Activated CD4-positive, alpha-beta T cell treated with anti-CD3 and anti-CD28 coated beads, Interleukin-2, amount 10 ng/mL, durations not matched to agents 24 days and 14 days (primary cell): ENCODE measurements at regions of chr10 and their contacts with region 1.

Region 1: DNA sequence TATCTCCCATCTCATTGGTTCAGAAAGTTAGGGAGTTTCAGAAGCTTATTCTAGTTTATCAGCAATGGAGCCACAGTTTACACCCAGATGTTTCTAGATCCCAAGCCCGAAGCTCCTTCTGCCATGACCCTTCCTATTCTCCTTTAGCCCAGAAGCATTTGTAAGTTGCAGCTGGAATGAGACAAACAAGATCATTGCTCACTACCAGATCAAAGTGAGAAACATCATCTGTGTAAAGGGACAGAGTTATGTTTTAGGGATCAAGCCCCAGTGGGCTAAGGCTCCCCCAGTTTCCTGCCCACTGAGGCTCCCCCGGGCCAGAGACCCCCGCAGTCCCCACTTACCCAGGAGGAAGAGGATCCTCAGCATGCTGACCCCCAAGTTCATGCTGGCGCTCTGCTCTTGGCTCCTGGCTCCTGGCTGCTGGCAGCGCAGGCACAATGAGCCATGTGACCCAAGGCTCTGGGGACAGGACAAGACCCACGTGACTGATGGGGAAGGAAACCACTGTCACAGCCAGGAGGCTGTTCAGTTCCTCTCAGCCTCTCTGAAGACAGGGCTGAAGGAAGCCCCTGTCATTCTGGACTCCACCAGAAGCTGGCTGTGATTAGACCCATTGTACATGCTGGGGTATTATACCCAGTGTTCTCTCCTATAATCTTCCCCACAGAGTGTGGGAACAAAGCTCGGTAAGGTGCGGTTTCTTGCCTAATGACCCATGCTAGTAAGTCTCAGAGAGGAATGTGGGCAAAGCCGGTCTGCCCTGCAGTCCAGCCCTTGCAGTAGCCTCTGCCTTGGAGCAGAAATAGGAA is at the start of gene TMEM273:
- DNase-seq: peak; percentile 77
- H3K4me3 Mint-ChIP-seq: peak within 1 kb of the TSS; percentile 83
- H3K27ac Mint-ChIP-seq: peak within 1 kb of the TSS; percentile 77
- H3K4me1 Mint-ChIP-seq: peaks cover 50% of the 10 kb centered on the region
- H3K27me3 Mint-ChIP-seq: peaks cover 6% of the 10 kb centered on the region
- total RNA-seq, gene TMEM273: 34.3 and 36.4 TPM in 2 replicates

Region 2: DNA sequence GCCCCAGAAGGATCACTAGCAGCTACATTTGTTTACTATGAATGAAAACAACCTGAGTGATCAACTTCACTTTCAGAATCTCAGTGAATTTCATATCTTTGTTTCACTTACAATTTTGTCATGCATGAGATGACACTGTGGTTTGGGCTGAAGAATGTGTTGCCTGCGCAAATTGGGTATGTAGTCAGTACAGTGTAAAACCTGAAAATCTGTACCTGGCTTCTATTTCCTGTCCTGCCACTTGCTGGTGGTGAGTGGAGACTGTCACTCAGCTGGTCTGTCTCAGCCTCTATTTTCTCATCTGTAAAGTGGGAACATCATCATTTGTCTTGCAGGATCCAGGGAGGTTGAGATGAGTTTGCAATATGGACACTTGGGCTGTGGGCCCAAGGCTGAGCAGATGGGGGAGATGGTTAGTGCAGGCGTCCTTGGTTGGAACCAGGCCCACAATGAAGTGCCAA is 385.5 kb before region 1 on chr10:
- intact Hi-C with region 1: loop called (anchors 5 kb)
- DNase-seq: peak; percentile 74
- H3K4me3 Mint-ChIP-seq: no peak overlapping the region
- H3K27ac Mint-ChIP-seq: no peak overlapping the region
- H3K4me1 Mint-ChIP-seq: peaks cover 58% of the 10 kb centered on the region
- H3K27me3 Mint-ChIP-seq: no peaks in the 10 kb centered on the region

Region 3: DNA sequence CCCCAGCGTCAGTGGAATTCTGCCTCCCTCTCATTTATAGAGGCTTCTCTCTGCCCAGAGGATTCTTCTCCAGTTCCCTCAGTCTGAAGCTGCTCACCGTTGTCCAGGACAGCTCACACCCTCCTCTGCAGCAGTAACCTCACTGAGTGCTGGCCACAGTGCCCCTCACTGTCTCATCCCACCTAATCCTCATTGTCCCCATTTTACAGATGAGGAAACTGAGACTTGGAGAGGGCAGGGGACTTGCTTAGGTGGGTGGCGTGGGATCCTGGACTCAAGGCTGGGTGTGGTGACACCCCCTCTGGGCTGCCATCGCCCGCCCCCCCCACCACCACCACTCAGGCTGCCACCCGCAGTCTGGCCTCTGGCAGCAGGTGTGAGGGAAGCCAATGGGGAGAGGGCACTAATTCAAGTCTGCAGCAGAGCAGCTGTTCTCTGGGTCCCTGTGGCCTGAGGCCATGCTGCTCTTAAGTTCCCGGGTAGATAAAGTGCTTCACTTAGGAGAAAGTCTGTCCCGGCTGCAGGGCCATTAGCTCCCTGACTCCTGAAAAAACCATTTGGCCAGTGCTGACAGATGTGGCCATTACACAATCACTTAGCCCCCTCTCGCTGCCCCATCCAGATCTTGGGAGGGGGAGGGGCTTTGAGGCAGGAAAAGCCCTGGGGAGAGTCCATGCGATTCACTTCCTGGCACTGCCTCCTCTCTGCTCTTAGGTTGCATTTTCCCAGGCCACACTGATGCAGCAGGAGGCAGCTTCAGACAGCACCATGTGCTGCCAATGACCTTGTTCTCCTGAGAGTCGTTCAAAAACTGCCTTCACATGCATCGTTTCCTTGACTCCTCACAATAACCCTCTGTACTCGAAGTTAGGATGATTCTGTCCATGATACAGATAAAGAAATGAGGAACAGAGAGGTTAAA is 171.5 kb after region 1 on chr10:
- intact Hi-C with region 1: loop called (anchors 5 kb)
- DNase-seq: no peak
- H3K4me3 Mint-ChIP-seq: no peak overlapping the region
- H3K27ac Mint-ChIP-seq: no peak overlapping the region
- H3K4me1 Mint-ChIP-seq: peaks cover 5% of the 10 kb centered on the region
- H3K27me3 Mint-ChIP-seq: peaks cover 2% of the 10 kb centered on the region